ENCODE measurements at regions of chr22 and their contacts with region 1.

Region 1: DNA sequence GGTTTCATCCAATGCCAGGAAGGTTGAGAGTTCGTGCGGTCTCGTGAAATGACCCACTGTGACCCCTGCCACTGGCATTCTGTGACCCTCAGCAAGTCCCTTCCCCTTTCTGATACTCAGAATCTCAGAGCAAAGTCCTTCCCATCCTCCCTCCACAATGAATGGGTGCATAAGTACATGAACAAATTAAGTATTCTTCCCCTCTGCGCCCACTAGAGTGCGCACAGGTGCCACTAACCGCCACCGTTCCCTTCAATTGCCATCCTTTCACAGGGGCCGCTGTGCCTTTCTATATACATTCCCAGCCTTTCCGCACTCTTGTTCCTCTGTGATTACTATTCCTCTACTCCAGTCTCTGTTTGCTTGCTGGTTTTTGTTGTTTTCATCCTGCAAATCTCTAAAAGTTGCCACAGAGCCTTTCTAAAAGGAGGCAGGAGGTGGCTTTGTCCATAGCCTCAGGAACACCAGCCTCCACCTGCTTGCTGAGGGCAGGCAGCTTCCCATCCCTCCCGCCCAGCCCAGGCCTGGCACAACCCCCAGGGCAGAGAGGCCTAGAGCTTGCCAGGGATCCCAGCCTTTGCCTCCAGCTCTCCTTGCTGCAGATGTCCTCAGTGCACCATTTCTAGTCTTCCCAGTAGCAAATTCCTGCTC is 6.7 kb upstream of the AP1B1 start:
- DNase-seq: peak; percentile 73
- ATAC-seq: peak; percentile 95

Region 2: GRCh38 chr22:29524440-29525191 is 129.6 kb after region 1 on chr22:
- intact Hi-C with region 1: loop called (anchors 10 kb)
- DNase-seq: no peak
- ATAC-seq: peak; percentile 82

Measured in Right ventricle myocardium superior (tissue), 1 donor.